Vagina (tissue), 2 donors: ENCODE measurements at regions of chr15 and their contacts with region 1.

Region 1: DNA sequence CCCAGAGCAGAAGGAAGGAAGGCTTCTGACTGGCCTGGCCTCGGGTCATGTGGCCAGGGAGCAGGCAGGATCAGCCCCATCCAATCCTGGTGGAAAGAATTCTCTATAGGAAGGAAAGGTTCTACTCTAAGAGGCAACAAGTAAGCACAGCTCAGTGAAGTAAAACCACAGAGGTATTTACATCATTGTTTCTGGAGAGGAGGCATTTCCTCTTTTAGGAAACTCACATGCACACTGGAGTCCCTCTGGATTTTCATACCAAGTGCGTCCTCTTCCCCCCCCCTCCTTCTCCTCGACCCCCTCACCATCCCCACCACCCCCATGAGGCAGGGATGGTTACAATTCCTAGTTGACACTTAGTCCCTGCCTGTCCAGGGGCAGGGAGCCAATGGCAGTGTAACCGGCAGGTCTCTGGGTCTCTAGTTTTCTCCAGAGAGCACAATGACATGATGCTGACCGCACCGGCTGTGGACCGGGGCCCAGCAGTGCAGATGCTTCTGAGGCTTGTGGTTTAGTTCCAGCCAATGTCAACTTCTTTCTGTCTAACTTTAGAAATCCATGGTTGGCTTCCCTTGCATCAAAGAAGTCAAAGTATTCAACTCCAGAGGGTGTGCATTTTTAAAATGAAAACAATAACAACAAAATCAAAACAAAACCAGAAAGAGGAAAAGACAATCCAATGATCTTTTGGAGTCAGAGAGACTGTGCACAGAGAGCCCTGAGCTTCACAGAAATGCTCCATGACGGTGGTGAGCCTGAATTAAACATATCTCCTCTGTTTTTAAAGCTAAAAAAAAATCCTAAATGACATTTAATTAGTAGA is 230.3 kb upstream of the TLE3 start:
- DNase-seq: peak in 1 of 2 donors; percentile 81
- H3K4me3 ChIP-seq: no peak overlapping the region
- H3K27ac ChIP-seq: peak overlapping the region; percentile 39
- H3K4me1 ChIP-seq: peaks cover 44% of the 10 kb centered on the region
- H3K27me3 ChIP-seq: no peaks in the 10 kb centered on the region
- CTCF ChIP-seq: no peak
- POLR2A ChIP-seq: no peak

Region 2: GRCh38 chr15:69749797-69750196 is 578.3 kb before region 1 on chr15:
- intact Hi-C with region 1: loop called (anchors 5 kb)
- DNase-seq: no peak
- H3K4me3 ChIP-seq: no peak overlapping the region
- H3K27ac ChIP-seq: no peak overlapping the region
- H3K4me1 ChIP-seq: no peaks in the 10 kb centered on the region
- H3K27me3 ChIP-seq: no peaks in the 10 kb centered on the region
- CTCF ChIP-seq: no peak
- POLR2A ChIP-seq: no peak

Region 3: DNA sequence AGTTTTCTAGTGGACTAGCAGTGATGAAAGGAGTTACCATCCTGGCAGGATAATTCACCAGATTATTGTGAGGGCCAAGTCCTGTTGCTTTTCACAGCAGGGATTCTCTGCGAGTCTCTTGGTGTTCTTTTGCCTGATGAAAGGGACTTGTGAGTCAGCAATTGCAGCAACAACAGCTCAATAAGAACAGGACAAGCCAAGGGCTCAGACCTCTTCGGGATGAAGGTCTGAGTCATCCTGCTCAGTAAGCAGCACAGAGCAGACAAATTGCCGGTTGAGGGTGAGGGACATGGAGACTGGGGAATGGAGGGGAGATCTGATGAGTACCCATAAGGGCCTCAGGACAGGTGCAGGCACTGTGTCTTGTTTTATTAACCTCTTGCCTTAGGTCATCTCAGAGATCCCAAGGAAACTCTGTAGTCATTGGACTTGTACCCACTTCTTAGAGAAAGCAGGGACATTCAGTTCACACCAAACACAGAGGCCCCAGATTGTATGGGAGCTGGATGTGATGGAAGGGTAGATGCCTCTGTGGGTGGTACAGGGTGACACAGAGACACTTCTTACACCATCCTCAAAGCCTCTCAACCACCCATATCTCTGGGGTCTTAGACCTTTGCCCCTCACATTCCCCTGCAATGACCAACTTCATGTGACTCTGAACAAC is 56.5 kb before region 1 on chr15:
- intact Hi-C with region 1: loop called (anchors 5 kb)
- DNase-seq: peak in 1 of 2 donors; percentile 98
- H3K4me3 ChIP-seq: peak overlapping the region in 1 of 2 donors; percentile 10
- H3K27ac ChIP-seq: peak overlapping the region; percentile 76
- H3K4me1 ChIP-seq: peaks cover 39% of the 10 kb centered on the region
- H3K27me3 ChIP-seq: no peaks in the 10 kb centered on the region
- CTCF ChIP-seq: no peak
- POLR2A ChIP-seq: no peak

Region 4: DNA sequence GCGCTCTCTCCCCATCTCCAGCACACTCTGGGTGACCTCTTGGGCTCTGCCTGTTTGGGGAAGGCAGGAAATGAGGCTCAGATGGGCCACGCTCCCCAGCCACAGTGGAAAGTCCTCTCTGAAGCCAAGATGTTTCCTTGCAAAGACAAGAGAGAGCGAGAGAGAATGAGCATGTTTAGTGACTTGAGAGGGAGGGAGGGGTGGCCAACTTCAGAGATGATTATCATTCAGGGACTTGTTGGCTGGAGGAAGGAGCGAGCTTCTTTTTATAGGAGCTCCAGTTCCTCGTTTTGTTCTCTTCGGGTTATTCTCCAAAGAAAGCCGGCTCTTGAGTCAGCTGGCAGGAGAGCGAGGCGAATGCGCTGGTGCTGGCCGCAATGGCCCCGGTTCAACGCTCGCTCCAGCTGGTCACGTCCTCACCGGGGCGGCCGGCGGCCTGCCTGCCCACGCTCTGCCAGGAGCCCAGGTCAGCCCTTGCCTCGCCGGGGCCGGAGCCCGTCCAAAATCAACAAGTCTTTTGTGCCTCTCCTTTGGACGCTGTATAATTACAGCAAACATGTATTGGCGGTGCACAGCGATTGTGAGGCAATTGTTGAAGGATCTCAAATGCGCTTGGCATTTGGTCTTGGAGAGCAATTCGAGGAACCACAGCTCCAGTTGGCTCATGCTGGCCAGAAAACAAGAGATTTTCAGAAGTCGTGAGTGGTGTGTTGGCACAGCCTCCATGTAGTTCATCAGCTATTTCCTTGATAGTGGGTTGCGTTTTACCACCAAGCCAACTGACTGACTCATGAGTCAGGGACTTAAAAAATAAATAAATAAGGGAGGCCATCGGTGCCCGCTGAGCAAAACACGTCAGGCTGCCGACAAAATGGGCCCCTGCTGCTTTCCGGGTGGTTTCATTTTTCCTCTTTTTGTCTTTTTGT is 146.7 kb after region 1 on chr15:
- intact Hi-C with region 1: loop called (anchors 10 kb)
- DNase-seq: peak in 1 of 2 donors; percentile 93
- H3K4me3 ChIP-seq: peak overlapping the region; percentile 10 to 38
- H3K27ac ChIP-seq: peak overlapping the region; percentile 51
- H3K4me1 ChIP-seq: peaks cover 30% of the 10 kb centered on the region
- H3K27me3 ChIP-seq: no peaks in the 10 kb centered on the region
- CTCF ChIP-seq: no peak
- POLR2A ChIP-seq: no peak